Activated CD8-positive, alpha-beta memory T cell treated with anti-CD3 and anti-CD28 coated beads, Interleukin-2, amount 10 ng/mL, durations not matched to agents 7 days and 5 days (primary cell): ENCODE measurements at regions of chr20 and their contacts with region 1.

Region 1: GRCh38 chr20:50509935-50510705 is at the start of gene PTPN1:
- DNase-seq: peak; percentile 99
- ATAC-seq: peak; percentile 90
- H3K4me3 Mint-ChIP-seq: peak within 1 kb of the TSS; percentile 95
- H3K27ac Mint-ChIP-seq: peak within 1 kb of the TSS; percentile 81
- H3K4me1 Mint-ChIP-seq: peaks cover 41% of the 10 kb centered on the region
- H3K27me3 Mint-ChIP-seq: no peaks in the 10 kb centered on the region
- total RNA-seq, gene PTPN1: 62.5 to 74.7 TPM

Region 2: GRCh38 chr20:50569864-50570836 is 60.0 kb after region 1 on chr20:
- CTCF ChIA-PET with region 1: interaction called, 40 read pairs
- DNase-seq: peak; percentile 69
- ATAC-seq: peak; percentile 89
- H3K4me3 Mint-ChIP-seq: no peak overlapping the region
- H3K27ac Mint-ChIP-seq: peak overlapping the region; percentile 81
- H3K4me1 Mint-ChIP-seq: peaks cover 52% of the 10 kb centered on the region
- H3K27me3 Mint-ChIP-seq: no peaks in the 10 kb centered on the region